Naive thymus-derived CD4-positive, alpha-beta T cell (primary cell): ENCODE measurements at regions of chrX and their contacts with region 1.

Region 1: DNA sequence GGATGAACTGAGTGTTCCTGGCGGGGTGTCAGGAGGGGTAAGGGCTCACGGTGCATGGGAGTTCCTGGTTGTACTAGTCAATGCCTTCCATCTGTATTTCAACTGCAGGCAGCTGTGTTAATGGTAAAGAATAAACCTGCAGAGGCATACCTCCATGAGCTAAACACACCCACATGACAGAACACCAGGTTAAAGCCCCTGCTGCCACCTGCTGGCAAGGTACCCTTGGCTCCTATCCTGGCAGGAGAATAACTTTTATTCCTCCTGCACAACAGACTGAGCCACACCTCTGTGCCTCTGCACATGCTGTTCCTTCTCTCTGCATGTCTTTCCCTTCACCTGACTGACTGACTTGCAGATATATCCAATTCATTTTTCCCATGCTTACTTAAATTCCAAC is 11.1 kb downstream of the ITIH6 start:
- DNase-seq: peak in 6 of 9 donors; percentile 12 to 46 (median 34)
- ATAC-seq: peak; percentile 63
- H3K4me3 ChIP-seq: no peak overlapping the region
- H3K4me3 Mint-ChIP-seq: no peak overlapping the region
- H3K27ac ChIP-seq: no peak overlapping the region
- H3K27ac Mint-ChIP-seq: peak overlapping the region in 1 of 9 donors; percentile 24
- H3K4me1 ChIP-seq: no peaks in the 10 kb centered on the region
- H3K4me1 Mint-ChIP-seq: peaks cover 0 to 5% (median 0%) of the 10 kb centered on the region in 7 donors
- H3K27me3 ChIP-seq: no peaks in the 10 kb centered on the region
- H3K27me3 Mint-ChIP-seq: peaks cover 0 to 3% (median 0%) of the 10 kb centered on the region in 5 donors

Region 2: DNA sequence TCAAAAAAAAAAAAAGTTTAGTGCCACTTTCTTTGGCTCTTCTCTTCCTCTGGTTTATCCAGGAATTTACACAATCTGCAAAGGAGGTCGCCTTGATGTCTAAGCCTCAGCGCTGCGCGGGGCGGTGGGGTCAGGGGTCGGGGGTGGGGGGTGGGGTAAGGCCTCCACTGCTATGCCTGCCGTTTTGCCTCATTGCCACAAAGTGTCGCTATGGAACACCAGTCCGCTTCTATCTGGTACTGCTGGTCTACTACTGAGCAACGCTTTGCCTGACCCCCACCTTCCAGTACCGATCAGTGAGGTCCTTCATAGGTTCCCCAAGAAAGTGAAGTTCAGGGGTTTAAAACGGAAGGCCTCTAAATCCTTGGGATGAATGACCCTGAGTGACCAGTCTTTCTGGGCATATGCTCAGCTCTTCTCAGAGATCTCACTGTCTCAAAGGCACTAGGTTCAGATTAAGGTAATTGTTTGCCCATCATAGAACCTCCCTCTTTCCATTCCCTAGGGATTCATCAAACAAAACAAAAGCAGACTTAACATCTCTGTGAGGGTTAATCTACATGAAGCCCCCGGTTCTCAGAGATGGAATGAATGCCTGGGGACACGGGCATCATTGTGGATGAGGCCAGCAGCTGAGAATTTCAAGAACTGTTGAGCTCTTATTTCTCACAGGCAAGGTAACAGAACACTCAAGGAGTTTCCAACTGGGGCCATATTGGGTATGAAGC is 363.6 kb before region 1 on chrX:
- CTCF ChIA-PET with region 1: no interaction called
- POLR2A ChIA-PET with region 1: no interaction called
- intact Hi-C with region 1: loop called in 1 of 2 experiments (anchors 5 kb)
- DNase-seq: no peak
- ATAC-seq: no peak
- H3K4me3 ChIP-seq: no peak overlapping the region
- H3K4me3 Mint-ChIP-seq: no peak overlapping the region
- H3K27ac ChIP-seq: no peak overlapping the region
- H3K27ac Mint-ChIP-seq: no peak overlapping the region
- H3K4me1 ChIP-seq: no peaks in the 10 kb centered on the region
- H3K4me1 Mint-ChIP-seq: no peaks in the 10 kb centered on the region
- H3K27me3 ChIP-seq: no peaks in the 10 kb centered on the region
- H3K27me3 Mint-ChIP-seq: peaks cover 0 to 13% (median 2%) of the 10 kb centered on the region in 5 donors

Region 3: GRCh38 chrX:54728425-54728824 is 58.5 kb before region 1 on chrX:
- CTCF ChIA-PET with region 1: no interaction called
- POLR2A ChIA-PET with region 1: no interaction called
- intact Hi-C with region 1: no loop called
- DNase-seq: no peak
- ATAC-seq: no peak
- H3K4me3 ChIP-seq: no peak overlapping the region
- H3K4me3 Mint-ChIP-seq: no peak overlapping the region
- H3K27ac ChIP-seq: no peak overlapping the region
- H3K27ac Mint-ChIP-seq: no peak overlapping the region
- H3K4me1 ChIP-seq: no peaks in the 10 kb centered on the region
- H3K4me1 Mint-ChIP-seq: no peaks in the 10 kb centered on the region
- H3K27me3 ChIP-seq: no peaks in the 10 kb centered on the region
- H3K27me3 Mint-ChIP-seq: peaks cover 0 to 15% (median 0%) of the 10 kb centered on the region in 5 donors